GM10248 (cell line): ENCODE measurements at regions of chr1 and their contacts with region 1.

Region 1: GRCh38 chr1:211495584-211495983 is 3.6 kb upstream of the RD3 start:
- DNase-seq: no peak
- CTCF ChIP-seq: no peak

Region 2: DNA sequence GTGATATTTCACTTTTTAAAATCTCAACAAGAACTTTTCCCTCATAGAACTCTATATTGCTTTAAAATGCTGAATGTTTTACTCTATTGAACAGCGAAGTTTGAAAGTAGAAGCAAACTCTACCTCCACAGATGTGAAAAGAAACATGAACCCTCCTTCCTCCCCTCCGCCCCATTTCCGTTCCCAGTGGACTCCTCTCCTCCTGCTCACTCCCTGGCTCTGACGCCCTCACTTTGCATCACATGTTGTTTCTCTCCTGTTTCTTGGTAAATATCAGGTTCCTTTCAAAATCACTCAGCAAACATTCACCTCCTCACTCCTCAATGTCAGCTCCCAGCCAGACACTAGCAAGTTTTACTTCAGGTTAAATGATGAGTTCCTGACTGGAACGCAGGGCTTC is 396.2 kb before region 1 on chr1:
- CTCF ChIA-PET with region 1: no interaction called
- POLR2A ChIA-PET with region 1: no interaction called
- DNase-seq: no peak
- CTCF ChIP-seq: no peak

Region 3: DNA sequence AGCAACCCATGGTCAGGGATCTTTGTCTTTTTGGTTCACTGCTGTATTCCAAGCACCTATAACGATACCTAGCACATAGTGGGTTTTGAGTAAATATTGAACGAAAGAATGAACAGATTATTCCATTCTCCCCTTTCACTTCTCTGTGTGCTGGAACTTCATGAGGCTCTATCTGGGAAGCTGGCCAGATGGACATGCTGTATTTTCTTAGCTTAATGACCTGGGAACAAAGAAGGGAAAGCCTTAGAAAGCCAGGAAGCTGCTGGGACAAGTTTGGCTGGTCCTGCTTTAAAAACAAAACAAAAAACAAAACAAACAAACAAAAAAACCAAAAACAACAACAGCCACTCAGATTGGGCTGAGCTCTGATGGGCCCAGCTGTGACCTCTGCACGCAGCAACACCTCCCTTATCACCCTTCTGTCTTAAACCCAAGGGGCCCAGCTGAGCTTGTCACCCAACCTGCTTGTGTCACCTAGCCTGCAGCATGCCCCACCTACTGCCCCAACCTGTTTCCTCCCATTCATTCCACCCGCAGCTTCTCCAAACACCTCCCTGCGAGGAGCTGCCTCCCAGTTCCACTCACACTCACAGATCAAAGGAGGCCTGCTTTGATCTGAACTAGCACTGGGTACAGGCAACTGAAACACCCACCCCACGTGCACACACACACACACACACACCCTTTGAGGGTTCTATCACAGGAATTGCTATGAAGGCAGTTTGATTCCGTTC is 46.3 kb after region 1 on chr1:
- CTCF ChIA-PET with region 1: no interaction called
- POLR2A ChIA-PET with region 1: no interaction called
- DNase-seq: peak; percentile 10
- CTCF ChIP-seq: no peak

Region 4: GRCh38 chr1:212147581-212148033 is 652.0 kb after region 1 on chr1:
- CTCF ChIA-PET with region 1: no interaction called
- POLR2A ChIA-PET with region 1: interaction called, 11 read pairs
- DNase-seq: no peak
- CTCF ChIP-seq: no peak